ENCODE measurements at regions of chr1 and their contacts with region 1.

Region 1: DNA sequence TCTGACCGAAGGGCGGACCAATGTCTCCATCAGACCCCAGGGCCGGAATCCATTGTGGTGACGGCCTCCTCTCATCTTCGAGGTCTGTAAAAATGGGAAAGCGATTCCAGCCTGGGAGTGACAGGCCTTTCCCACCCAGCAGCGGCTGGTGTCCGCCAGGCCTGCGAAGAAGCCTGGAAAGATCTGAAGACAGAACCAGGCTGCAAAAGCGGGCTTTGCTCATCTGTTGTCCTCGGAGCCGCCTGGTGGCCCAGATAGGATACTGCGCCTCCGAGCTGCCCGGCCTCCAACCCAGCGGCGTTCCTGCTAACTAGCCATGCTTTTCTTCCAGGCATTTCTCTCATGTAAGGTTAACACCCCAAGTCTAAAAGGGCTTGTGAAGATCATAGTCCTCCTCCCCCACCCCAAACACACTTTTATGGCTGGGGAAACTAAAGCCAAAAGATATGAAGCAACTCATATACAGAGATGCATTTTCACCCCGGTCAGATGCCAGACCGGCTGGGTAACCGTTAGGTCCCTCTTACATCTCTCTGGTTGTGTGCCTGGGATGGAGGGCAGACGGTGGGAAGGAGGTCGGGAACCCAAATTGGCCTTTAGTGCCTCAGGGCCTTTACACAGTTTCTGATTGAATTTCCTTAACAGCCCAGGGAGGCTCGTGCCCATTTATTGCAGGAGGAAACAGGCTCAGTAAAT is 1.9 kb upstream of the DHRS3 start:
- DNase-seq: peak; percentile 90 to 97
- H3K4me3 ChIP-seq: no peak overlapping the region
- CTCF ChIP-seq: peak in 1 of 3 donors; percentile 93
- POLR2A ChIP-seq: no peak

Region 2: DNA sequence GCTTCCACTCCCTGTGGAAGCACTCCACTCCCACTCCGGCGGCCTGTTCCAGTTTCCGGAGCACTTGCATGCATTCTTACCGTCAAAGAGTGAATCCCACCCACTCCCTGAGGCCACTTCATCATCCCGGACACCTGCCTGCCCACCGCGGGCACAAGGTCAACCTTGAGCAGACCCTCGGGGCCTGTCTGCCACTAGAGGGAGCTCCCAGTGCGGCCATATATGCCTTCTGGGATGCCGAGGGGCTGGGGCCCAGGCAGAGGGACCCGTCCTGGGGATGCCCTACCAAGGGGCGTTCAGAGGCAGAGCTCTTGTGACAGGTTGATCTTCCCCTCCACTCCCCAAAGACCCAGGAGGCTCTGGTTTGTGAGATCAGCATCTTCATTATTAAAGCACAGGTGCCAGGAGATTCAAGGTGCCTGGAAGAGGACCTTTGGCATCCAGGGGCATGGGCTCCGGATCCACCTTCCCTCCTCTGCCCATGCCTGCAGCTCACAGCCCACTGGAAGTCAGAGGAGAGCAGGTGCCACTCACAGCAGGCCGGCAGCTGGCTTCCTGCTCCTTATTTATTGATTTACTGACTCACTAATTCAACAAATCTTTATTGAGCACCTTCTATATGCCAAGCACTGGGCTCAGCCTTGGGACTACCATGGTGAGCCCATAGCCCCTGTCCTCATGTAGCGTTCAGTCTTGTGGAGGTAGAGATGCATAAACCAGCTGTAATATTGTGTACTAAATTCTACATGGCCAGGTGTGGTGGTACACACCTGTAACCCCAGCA is 1299.6 kb before region 1 on chr1:
- intact Hi-C with region 1: no loop called
- DNase-seq: no peak
- H3K4me3 ChIP-seq: no peak overlapping the region
- CTCF ChIP-seq: no peak
- POLR2A ChIP-seq: no peak

Region 3: DNA sequence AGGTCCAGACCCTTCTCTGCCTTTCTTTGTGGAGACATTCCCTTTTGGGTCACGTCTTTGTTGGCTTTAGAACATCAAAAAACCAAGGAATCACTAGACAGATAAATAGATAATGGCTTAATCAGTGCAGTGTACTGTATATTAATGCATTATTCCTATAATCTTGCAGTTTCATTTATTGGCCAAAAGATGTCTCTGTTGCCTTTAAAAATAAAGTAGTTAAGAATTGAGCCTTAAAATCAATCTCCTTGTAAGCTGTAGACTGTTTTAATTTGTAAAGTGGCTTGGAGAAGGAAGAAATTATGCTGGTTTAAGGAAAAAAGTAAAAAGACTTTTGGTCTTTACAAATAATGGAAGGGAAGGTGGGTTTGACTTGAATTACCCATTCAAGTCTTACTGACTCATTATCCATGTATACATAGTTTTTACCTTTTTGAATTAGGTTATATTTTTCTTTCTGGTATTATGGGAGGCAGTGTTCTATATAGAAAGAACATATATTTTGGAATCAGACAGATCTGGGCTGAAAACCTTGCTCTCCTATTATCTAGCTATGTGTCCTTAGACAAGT is 305.5 kb before region 1 on chr1:
- intact Hi-C with region 1: loop called (anchors 10 kb)
- DNase-seq: no peak
- H3K4me3 ChIP-seq: no peak overlapping the region
- CTCF ChIP-seq: no peak
- POLR2A ChIP-seq: no peak

Measured in lower leg skin (tissue), 4 donors.